ENCODE measurements at regions of chr6 and their contacts with region 1.

Region 1: GRCh38 chr6:113482771-113483170 is 374.4 kb upstream of the MARCKS start:
- DNase-seq: no peak
- H3K4me3 Mint-ChIP-seq: no peak overlapping the region
- H3K27ac Mint-ChIP-seq: no peak overlapping the region
- H3K4me1 Mint-ChIP-seq: no peaks in the 10 kb centered on the region
- H3K27me3 Mint-ChIP-seq: no peaks in the 10 kb centered on the region
- CTCF ChIP-seq: no peak

Region 2: DNA sequence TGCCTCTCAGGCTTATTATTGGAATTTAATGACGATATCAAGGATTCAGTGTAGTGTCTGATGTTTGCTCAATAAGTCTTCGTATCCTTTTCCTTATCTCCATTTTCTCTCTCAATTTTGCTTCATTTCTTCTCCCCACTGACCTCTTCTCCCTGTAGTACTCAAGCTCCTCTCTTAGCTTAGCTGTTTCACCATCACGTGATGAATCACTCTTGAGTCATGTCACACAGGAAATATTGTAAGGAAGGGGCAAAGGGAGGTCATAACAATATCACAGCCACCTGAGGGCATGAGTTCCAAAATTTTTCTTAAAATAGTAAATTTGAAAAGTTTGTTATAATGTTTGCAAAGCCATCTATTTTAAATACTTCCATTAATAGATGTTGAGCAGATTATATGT is 17.8 kb before region 1 on chr6:
- CTCF ChIA-PET with region 1: no interaction called
- intact Hi-C with region 1: no loop called
- DNase-seq: peak; percentile 9
- H3K4me3 Mint-ChIP-seq: peak overlapping the region; percentile 6
- H3K27ac Mint-ChIP-seq: peak overlapping the region; percentile 74
- H3K4me1 Mint-ChIP-seq: peaks cover 23% of the 10 kb centered on the region
- H3K27me3 Mint-ChIP-seq: no peaks in the 10 kb centered on the region
- CTCF ChIP-seq: no peak

Region 3: GRCh38 chr6:113924312-113924723 is 441.5 kb after region 1 on chr6:
- CTCF ChIA-PET with region 1: interaction called, 10 read pairs
- intact Hi-C with region 1: no loop called
- DNase-seq: no peak
- H3K4me3 Mint-ChIP-seq: no peak overlapping the region
- H3K27ac Mint-ChIP-seq: no peak overlapping the region
- H3K4me1 Mint-ChIP-seq: no peaks in the 10 kb centered on the region
- H3K27me3 Mint-ChIP-seq: no peaks in the 10 kb centered on the region
- CTCF ChIP-seq: no peak

Measured in Calu3 (cell line).